Activated CD4-positive, alpha-beta memory T cell treated with anti-CD3 and anti-CD28 coated beads for 36 hours (primary cell): ENCODE measurements at regions of chr16 and their contacts with region 1.

Region 1: DNA sequence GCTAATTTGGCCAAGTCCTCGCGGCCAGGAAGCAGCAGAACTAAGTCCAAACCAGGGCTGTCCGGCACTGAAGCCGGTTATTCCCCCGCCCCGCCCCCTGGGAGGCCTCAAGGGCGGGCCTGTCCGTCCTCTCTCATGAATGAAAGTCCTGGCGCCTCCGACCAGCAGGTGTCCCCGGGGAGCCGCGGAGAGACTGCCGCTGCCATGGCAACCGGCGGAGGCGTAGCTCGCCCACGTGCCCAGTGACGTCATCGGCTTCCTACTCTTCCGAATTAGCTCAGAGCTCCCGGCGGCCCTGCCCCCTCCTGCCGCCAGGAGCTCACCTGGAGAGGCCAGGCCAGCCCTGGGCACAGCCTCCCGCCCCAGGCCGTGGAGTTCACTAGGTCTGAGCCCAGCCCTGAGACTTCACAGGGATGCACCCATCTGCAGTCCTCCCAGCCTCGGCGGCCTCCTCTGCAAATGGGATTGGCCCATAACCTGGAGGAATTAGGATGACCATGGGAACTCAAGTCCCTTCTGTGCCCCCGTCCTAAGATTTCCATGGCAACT is 1.3 kb downstream of the SPATA2L start:
- DNase-seq: peak; percentile 98
- H3K4me3 Mint-ChIP-seq: peak overlapping the region; percentile 72
- H3K27ac Mint-ChIP-seq: peak overlapping the region; percentile 23
- H3K4me1 Mint-ChIP-seq: peaks cover 22% of the 10 kb centered on the region
- H3K27me3 Mint-ChIP-seq: no peaks in the 10 kb centered on the region

Region 2: DNA sequence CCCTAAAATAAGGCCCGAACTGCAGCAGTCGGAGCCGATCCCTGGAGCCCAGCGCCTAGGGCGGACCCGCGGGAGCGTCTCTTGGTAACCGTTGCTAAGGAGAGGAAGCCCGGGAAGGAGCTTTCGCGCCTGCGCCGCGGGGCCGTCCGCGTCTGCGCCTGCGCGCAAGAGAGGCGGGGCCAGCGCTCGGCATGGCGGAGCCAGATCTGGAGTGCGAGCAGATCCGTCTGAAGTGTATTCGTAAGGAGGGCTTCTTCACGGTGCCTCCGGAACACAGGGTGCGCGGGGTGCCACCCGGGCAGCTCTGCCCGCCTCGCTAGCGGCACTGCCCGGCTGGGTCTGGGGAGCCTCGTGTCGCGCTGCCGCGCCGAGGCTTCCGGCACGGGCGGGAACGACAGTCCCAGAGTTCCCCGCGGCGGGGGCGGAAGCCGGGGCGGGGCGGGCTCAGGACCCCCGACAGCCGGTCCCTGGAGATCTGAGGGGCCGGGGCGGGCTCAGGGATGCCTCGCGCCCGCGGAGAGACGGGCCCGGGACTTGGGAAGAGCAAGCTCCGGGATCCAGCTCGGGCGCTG is 13.6 kb before region 1 on chr16 and contains the start of gene CDK10:
- CTCF ChIA-PET with region 1: interaction called, 31 read pairs
- POLR2A ChIA-PET with region 1: interaction called, 12 read pairs
- intact Hi-C with region 1: loop called (anchors 1 kb)
- DNase-seq: peak; percentile 94
- H3K4me3 Mint-ChIP-seq: peak within 1 kb of the TSS; percentile 92
- H3K27ac Mint-ChIP-seq: peak within 1 kb of the TSS; percentile 90
- H3K4me1 Mint-ChIP-seq: peaks cover 15% of the 10 kb centered on the region
- H3K27me3 Mint-ChIP-seq: no peaks in the 10 kb centered on the region
- total RNA-seq, gene CDK10: 90.0 to 92.4 TPM

Region 3: GRCh38 chr16:89720813-89721545 is 20.8 kb after region 1 on chr16 and contains the starts of genes VPS9D1 and ZNF276:
- CTCF ChIA-PET with region 1: interaction called, 27 read pairs
- POLR2A ChIA-PET with region 1: interaction called, 7 read pairs
- intact Hi-C with region 1: loop called (anchors 1 kb)
- DNase-seq: peak; percentile 87
- H3K4me3 Mint-ChIP-seq: peak within 1 kb of the TSS; percentile 87
- H3K27ac Mint-ChIP-seq: peak within 1 kb of the TSS; percentile 88
- H3K4me1 Mint-ChIP-seq: peaks cover 38% of the 10 kb centered on the region
- H3K27me3 Mint-ChIP-seq: no peaks in the 10 kb centered on the region
- total RNA-seq, gene VPS9D1: 2.9 to 3.2 TPM
- total RNA-seq, gene ZNF276: 22.1 to 25.6 TPM

Region 4: GRCh38 chr16:89764711-89765201 is 64.6 kb after region 1 on chr16:
- CTCF ChIA-PET with region 1: interaction called, 18 read pairs
- POLR2A ChIA-PET with region 1: no interaction called
- intact Hi-C with region 1: no loop called
- DNase-seq: peak; percentile 72
- H3K4me3 Mint-ChIP-seq: peak overlapping the region; percentile 48
- H3K27ac Mint-ChIP-seq: peak overlapping the region; percentile 61
- H3K4me1 Mint-ChIP-seq: peaks cover 46% of the 10 kb centered on the region
- H3K27me3 Mint-ChIP-seq: no peaks in the 10 kb centered on the region

Region 5: GRCh38 chr16:89873972-89874689 is 174.0 kb after region 1 on chr16:
- CTCF ChIA-PET with region 1: interaction called, 13 read pairs
- POLR2A ChIA-PET with region 1: interaction called, 13 read pairs
- intact Hi-C with region 1: loop called (anchors 1 kb)
- DNase-seq: peak; percentile 97
- H3K4me3 Mint-ChIP-seq: peak overlapping the region; percentile 85
- H3K27ac Mint-ChIP-seq: peak overlapping the region; percentile 98
- H3K4me1 Mint-ChIP-seq: peaks cover 14% of the 10 kb centered on the region
- H3K27me3 Mint-ChIP-seq: no peaks in the 10 kb centered on the region

Region 6: GRCh38 chr16:89922884-89923690 is 222.9 kb after region 1 on chr16 and contains the start of gene TUBB3:
- CTCF ChIA-PET with region 1: interaction called, 4 read pairs
- POLR2A ChIA-PET with region 1: no interaction called
- intact Hi-C with region 1: loop called (anchors 5 kb)
- DNase-seq: peak; percentile 55
- H3K4me3 Mint-ChIP-seq: peak within 1 kb of the TSS; percentile 59
- H3K27ac Mint-ChIP-seq: no peak within 1 kb of the TSS
- H3K4me1 Mint-ChIP-seq: peaks cover 46% of the 10 kb centered on the region
- H3K27me3 Mint-ChIP-seq: peaks cover 48% of the 10 kb centered on the region
- total RNA-seq, gene TUBB3: 0.99 to 1.4 TPM